Heart left ventricle (tissue), 16 donors: ENCODE measurements at regions of chr11 and their contacts with region 1.

Region 1: GRCh38 chr11:3939211-3939610 is 83.7 kb downstream of the STIM1 start:
- DNase-seq: no peak
- ATAC-seq: no peak
- H3K4me3 ChIP-seq: no peak overlapping the region
- H3K27ac ChIP-seq: peak overlapping the region in 1 of 12 donors; percentile 46
- H3K4me1 ChIP-seq: peaks cover 0 to 61% (median 38%) of the 10 kb centered on the region in 12 donors
- H3K27me3 ChIP-seq: no peaks in the 10 kb centered on the region
- CTCF ChIP-seq: no peak
- POLR2A ChIP-seq: no peak

Region 2: GRCh38 chr11:4065601-4066377 is 126.6 kb after region 1 on chr11:
- intact Hi-C with region 1: loop called in 1 of 10 experiments (anchors 10 kb)
- DNase-seq: peak in 3 of 5 donors; percentile 38 to 48 (median 47)
- ATAC-seq: peak; percentile 74 to 87 (median 80)
- H3K4me3 ChIP-seq: no peak overlapping the region
- H3K27ac ChIP-seq: peak overlapping the region in 2 of 12 donors; percentile 24 to 47
- H3K4me1 ChIP-seq: peaks cover 0 to 38% (median 22%) of the 10 kb centered on the region in 12 donors
- H3K27me3 ChIP-seq: no peaks in the 10 kb centered on the region
- CTCF ChIP-seq: peak in 3 of 12 donors; percentile 9 to 20 (median 18)
- POLR2A ChIP-seq: no peak